Mammary epithelial cell (primary cell): ENCODE measurements at regions of chr3 and their contacts with region 1.

Region 1: DNA sequence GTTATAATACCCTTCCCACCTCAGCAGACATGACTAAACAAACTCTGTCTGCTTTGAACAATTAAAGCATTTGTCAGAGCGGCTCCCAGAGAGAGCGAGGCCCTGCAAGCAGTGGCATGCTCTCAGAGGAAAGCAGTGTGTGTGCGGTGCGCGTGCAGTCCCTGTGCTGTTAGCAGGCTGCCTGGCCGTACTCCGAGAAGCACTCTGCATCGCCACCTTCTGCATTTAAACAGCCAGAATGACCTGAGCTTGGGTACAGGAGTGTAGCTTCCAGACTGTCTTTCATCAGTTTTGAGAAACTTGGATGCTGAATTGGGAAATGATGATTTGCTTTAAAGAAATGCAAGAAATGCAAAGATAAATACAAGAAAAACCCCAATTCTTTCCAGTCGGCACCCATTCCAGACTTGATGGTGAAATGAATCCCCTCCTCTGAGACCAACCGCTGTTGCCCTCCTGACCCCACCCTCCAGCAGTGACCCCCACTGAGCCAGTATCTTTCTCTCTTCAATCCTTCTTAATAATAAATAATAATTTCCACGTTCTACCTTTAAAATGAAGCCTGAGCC is 113.5 kb downstream of the VGLL4 start:
- DNase-seq: peak; percentile 99
- H3K4me3 ChIP-seq: no peak overlapping the region
- H3K27ac ChIP-seq: peak overlapping the region; percentile 69
- H3K4me1 ChIP-seq: peaks cover 20% of the 10 kb centered on the region
- H3K27me3 ChIP-seq: no peaks in the 10 kb centered on the region
- CTCF ChIP-seq: peak; percentile 39 to 53

Region 2: DNA sequence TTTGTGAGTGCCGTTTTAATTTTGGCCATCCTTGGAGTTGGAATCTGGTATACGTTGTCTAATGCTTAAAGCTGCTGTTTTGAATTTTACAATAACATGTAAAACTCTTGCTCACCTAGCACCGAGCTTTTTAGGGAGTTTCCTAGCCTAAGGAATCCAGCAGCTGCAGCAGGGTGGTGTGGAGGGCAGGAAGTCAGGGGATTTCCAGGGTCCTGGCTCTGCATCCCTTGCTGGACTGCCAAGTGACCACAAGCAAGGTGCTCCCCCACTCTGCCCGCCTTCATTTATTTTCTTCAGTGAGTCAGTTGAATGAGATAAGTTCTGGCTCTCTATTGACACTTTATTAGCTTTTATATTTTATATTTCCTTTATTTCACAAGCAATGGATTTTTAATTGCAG is 144.3 kb before region 1 on chr3:
- CTCF ChIA-PET with region 1: no interaction called
- dilution Hi-C with region 1: no loop called
- in situ Hi-C with region 1: no loop called
- intact Hi-C with region 1: loop called (anchors 1 kb)
- DNase-seq: peak; percentile 80
- H3K4me3 ChIP-seq: no peak overlapping the region
- H3K27ac ChIP-seq: peak overlapping the region; percentile 45
- H3K4me1 ChIP-seq: peaks cover 29% of the 10 kb centered on the region
- H3K27me3 ChIP-seq: no peaks in the 10 kb centered on the region
- CTCF ChIP-seq: no peak

Region 3: DNA sequence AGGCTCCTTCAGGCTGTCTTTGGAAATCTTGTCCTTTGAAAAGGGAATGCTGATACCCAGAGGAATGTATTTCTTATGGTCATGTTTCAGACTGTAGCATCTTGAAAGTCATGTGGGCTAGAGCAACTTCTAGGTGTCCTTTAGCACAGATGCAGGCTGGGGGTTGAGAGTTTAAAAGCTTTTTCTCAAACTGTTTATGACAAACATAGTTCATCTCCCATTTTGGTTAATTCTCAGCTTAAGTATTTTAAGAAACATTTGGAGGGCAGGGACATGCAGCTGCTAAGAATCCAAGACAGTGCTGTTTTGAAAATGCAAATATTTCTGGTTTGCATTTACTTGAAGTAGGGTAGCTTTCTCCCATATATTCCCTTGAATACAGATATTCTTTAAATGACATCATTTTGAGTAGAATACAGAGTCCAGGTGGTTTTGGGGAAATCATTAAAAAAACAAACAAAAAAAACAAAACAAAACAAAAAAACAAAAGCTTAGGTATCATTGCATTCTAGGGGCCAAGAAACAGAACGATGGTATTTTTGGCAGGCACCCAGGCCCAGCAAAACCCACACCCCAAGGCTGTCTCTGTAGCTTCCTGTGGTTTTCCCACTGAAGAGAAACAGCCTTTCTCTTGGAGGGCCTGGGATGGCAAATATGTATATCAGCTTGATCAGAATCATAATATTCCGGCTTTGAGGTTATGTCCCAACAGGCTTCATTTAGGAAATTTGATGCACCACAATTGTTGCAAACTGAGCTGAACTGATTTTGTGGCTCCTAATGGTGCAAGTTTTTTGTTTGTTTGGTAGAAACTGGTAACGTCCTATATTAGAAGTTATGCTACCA is 138.0 kb before region 1 on chr3:
- CTCF ChIA-PET with region 1: no interaction called
- dilution Hi-C with region 1: no loop called
- in situ Hi-C with region 1: no loop called
- intact Hi-C with region 1: loop called (anchors 2 kb)
- DNase-seq: peak; percentile 80
- H3K4me3 ChIP-seq: peak overlapping the region in 1 of 3 experiments; percentile 1
- H3K27ac ChIP-seq: peak overlapping the region; percentile 57
- H3K4me1 ChIP-seq: peaks cover 24% of the 10 kb centered on the region
- H3K27me3 ChIP-seq: no peaks in the 10 kb centered on the region
- CTCF ChIP-seq: no peak

Region 4: GRCh38 chr3:11430624-11431023 is 99.6 kb before region 1 on chr3:
- CTCF ChIA-PET with region 1: no interaction called
- dilution Hi-C with region 1: no loop called
- in situ Hi-C with region 1: no loop called
- intact Hi-C with region 1: no loop called
- DNase-seq: no peak
- H3K4me3 ChIP-seq: no peak overlapping the region
- H3K27ac ChIP-seq: no peak overlapping the region
- H3K4me1 ChIP-seq: no peaks in the 10 kb centered on the region
- H3K27me3 ChIP-seq: no peaks in the 10 kb centered on the region
- CTCF ChIP-seq: no peak

Region 5: GRCh38 chr3:11482021-11482420 is 48.2 kb before region 1 on chr3:
- CTCF ChIA-PET with region 1: no interaction called
- dilution Hi-C with region 1: no loop called
- in situ Hi-C with region 1: no loop called
- intact Hi-C with region 1: loop called (anchors 1 kb)
- DNase-seq: no peak
- H3K4me3 ChIP-seq: no peak overlapping the region
- H3K27ac ChIP-seq: no peak overlapping the region
- H3K4me1 ChIP-seq: peaks cover 22% of the 10 kb centered on the region
- H3K27me3 ChIP-seq: no peaks in the 10 kb centered on the region
- CTCF ChIP-seq: no peak

Region 6: GRCh38 chr3:11568503-11569155 is 38.4 kb after region 1 on chr3:
- CTCF ChIA-PET with region 1: no interaction called
- dilution Hi-C with region 1: no loop called
- in situ Hi-C with region 1: no loop called
- intact Hi-C with region 1: loop called (anchors 1 kb)
- DNase-seq: peak; percentile 92
- H3K4me3 ChIP-seq: peak overlapping the region in 2 of 3 experiments; percentile 24 to 33
- H3K27ac ChIP-seq: peak overlapping the region; percentile 96
- H3K4me1 ChIP-seq: peaks cover 59% of the 10 kb centered on the region
- H3K27me3 ChIP-seq: no peaks in the 10 kb centered on the region
- CTCF ChIP-seq: no peak

Region 7: DNA sequence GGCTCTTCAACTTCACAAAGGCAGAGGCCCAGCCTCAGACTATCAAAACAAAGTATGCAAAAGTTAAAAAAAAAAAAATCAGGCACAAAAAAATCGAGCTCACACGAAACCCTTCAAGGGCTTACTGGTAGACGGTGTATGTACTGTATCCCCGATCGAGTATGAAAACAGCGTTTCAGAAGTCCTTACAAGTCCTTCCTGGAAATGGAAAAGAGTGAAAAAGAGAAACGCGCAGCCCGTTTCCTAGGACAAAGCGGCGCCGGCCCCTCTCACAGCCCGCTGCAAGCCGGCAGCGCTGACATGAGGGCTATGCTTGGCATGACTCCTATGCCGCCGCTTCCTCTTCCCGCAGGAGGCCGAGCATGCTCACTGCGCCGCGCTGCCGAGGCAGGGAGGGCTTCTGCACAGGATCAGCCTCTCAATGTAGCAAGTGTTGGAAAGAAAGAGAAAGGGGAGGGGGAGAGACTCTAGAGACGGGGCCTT is 113.4 kb after region 1 on chr3 and contains the start of gene VGLL4:
- CTCF ChIA-PET with region 1: no interaction called
- dilution Hi-C with region 1: no loop called
- in situ Hi-C with region 1: no loop called
- intact Hi-C with region 1: loop called (anchors 1 kb)
- DNase-seq: peak; percentile 77
- H3K4me3 ChIP-seq: peak within 1 kb of the TSS; percentile 57 to 65 (median 61)
- H3K27ac ChIP-seq: peak within 1 kb of the TSS; percentile 93
- H3K4me1 ChIP-seq: peaks cover 31% of the 10 kb centered on the region
- H3K27me3 ChIP-seq: no peaks in the 10 kb centered on the region
- CTCF ChIP-seq: peak; percentile 6 to 31
- total RNA-seq, gene VGLL4: 30.8 to 77.3 TPM